Activated CD8-positive, alpha-beta T cell treated with anti-CD3 and anti-CD28 coated beads, Interleukin-2, amount 10 ng/mL, durations not matched to agents 7 days and 5 days (primary cell): ENCODE measurements at regions of chr2 and their contacts with region 1.

Region 1: GRCh38 chr2:25851740-25852503 is 26.4 kb downstream of the ASXL2 start:
- DNase-seq: peak; percentile 60
- ATAC-seq: peak; percentile 86
- H3K4me3 Mint-ChIP-seq: peak overlapping the region; percentile 66
- H3K27ac Mint-ChIP-seq: peak overlapping the region; percentile 84
- H3K4me1 Mint-ChIP-seq: peaks cover 43% of the 10 kb centered on the region
- H3K27me3 Mint-ChIP-seq: no peaks in the 10 kb centered on the region

Region 2: DNA sequence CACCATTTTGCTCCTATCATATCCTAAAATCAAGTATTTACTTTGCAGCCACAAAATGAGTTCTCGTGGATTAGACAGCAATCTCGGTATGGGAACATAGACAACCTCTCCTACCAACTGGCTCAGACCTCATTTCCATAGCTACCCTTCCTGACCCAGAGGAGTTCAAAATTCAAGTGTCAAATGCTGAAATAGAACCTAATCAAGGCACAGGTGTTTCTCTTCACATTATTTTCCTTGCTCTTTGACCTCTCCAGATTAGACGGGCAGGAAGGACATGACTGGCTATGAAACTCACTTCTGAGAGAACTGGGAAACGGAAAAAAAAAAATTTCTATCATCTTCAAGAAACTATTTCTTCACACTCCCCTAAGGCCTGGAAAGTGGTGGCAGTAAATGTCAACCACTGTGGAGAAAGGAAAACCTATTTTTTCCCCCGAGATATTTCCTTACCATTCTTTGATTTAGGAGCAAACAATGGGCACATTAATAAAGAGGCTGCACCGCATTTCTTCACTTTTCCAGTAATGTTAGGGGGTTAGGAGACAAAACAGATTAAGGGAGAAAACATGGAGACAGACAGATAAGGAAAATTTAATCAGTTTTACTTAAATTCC is 114.9 kb before region 1 on chr2:
- CTCF ChIA-PET with region 1: no interaction called
- POLR2A ChIA-PET with region 1: no interaction called
- DNase-seq: no peak
- ATAC-seq: no peak
- H3K4me3 Mint-ChIP-seq: no peak overlapping the region
- H3K27ac Mint-ChIP-seq: no peak overlapping the region
- H3K4me1 Mint-ChIP-seq: peaks cover 3% of the 10 kb centered on the region
- H3K27me3 Mint-ChIP-seq: no peaks in the 10 kb centered on the region

Region 3: DNA sequence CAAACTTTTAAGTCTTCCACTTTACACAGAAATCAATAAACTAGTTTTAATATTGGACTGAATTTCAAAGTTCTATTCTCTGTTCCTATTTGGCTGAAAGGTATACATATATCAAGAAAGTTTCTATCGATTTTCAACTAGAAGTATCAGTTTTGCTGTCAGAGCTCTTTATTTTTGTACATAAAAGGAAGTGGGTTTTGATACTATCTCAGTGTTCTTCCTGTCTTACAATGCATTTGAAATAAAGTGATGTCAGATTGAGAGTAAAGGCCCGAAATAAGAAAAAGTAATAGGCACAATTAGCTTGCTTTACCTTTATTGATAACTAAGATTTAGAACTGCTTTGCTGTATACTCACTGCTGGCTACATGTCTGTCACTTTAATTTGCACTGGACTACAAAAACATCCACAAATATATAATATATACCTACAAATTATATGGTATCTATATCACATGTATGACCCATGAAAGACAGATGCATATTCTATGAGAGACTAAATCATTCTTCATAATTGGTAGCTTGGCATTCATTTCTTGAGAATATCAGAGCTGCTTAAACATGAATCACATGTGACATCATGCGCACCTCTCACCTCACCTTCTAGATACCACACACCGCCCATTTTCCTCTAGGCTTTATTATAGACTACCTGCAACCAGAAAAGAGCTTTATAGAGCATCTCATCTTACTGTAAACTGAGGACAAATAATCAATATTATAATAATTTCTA is 57.2 kb before region 1 on chr2:
- CTCF ChIA-PET with region 1: interaction called, 24 read pairs
- POLR2A ChIA-PET with region 1: no interaction called
- DNase-seq: no peak
- ATAC-seq: peak; percentile 84
- H3K4me3 Mint-ChIP-seq: peak overlapping the region; percentile 87
- H3K27ac Mint-ChIP-seq: peak overlapping the region; percentile 95
- H3K4me1 Mint-ChIP-seq: peaks cover 74% of the 10 kb centered on the region
- H3K27me3 Mint-ChIP-seq: no peaks in the 10 kb centered on the region

Region 4: GRCh38 chr2:25825238-25825637 is 26.7 kb before region 1 on chr2:
- CTCF ChIA-PET with region 1: interaction called, 18 read pairs
- POLR2A ChIA-PET with region 1: no interaction called
- DNase-seq: peak; percentile 68
- ATAC-seq: peak; percentile 90
- H3K4me3 Mint-ChIP-seq: peak overlapping the region; percentile 60
- H3K27ac Mint-ChIP-seq: peak overlapping the region; percentile 83
- H3K4me1 Mint-ChIP-seq: peaks cover 69% of the 10 kb centered on the region
- H3K27me3 Mint-ChIP-seq: no peaks in the 10 kb centered on the region

Region 5: DNA sequence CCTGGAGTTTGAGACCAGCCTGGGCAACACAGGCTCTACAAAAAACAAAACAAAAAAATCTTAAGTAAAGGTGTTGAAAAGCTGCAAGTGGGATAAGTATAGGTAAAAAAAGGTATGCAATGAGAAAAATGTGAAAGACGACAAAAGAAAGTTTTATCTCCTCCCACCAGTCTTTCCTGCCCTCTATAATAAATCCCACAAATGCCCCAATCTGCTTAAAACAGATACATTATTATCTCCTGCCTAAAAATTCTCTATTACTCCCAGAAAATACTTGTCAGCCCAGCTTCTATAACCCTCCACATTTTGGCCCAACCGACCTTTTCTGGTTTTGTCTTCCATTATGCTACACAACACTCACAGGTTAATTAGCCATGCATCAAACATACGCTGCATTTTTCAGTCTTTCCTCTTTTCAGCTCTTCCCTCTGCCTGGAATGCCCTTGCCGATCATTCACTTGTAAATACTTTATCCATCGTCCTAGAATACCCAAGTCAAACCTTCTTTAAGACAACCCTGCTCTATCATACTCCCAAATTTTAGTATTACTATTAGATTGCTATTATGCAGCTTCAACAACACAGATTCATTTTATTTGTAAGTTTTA is 15.6 kb after region 1 on chr2:
- CTCF ChIA-PET with region 1: interaction called, 29 read pairs
- POLR2A ChIA-PET with region 1: interaction called, 4 read pairs
- DNase-seq: no peak
- ATAC-seq: no peak
- H3K4me3 Mint-ChIP-seq: no peak overlapping the region
- H3K27ac Mint-ChIP-seq: no peak overlapping the region
- H3K4me1 Mint-ChIP-seq: peaks cover 2% of the 10 kb centered on the region
- H3K27me3 Mint-ChIP-seq: no peaks in the 10 kb centered on the region

Region 6: DNA sequence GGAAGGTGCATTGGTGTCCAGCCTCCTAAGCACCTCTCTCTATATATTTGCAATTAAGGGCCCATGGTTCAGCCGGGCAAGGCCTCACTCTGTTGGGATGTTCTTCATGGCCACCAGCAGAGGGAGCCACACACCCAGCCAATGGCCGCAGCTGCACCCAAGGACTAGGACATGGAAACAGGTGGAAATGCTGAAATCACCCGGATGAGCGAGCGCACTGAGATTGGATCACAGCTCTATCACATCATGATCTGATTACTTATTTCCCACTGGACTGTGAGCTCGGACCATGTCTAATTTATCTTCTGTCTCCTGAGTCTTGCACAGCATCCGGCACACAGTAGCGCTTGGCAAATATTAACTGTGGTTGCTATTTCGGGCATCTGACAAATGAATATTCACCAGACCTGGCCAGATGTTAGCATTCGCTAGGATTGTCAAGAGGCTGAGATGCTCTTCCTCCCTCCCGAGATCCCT is 99.2 kb after region 1 on chr2:
- CTCF ChIA-PET with region 1: interaction called, 61 read pairs
- POLR2A ChIA-PET with region 1: no interaction called
- DNase-seq: peak; percentile 78
- ATAC-seq: peak; percentile 95
- H3K4me3 Mint-ChIP-seq: no peak overlapping the region
- H3K27ac Mint-ChIP-seq: no peak overlapping the region
- H3K4me1 Mint-ChIP-seq: peaks cover 6% of the 10 kb centered on the region
- H3K27me3 Mint-ChIP-seq: no peaks in the 10 kb centered on the region